ENCODE measurements at regions of chr13 and their contacts with region 1.

Region 1: DNA sequence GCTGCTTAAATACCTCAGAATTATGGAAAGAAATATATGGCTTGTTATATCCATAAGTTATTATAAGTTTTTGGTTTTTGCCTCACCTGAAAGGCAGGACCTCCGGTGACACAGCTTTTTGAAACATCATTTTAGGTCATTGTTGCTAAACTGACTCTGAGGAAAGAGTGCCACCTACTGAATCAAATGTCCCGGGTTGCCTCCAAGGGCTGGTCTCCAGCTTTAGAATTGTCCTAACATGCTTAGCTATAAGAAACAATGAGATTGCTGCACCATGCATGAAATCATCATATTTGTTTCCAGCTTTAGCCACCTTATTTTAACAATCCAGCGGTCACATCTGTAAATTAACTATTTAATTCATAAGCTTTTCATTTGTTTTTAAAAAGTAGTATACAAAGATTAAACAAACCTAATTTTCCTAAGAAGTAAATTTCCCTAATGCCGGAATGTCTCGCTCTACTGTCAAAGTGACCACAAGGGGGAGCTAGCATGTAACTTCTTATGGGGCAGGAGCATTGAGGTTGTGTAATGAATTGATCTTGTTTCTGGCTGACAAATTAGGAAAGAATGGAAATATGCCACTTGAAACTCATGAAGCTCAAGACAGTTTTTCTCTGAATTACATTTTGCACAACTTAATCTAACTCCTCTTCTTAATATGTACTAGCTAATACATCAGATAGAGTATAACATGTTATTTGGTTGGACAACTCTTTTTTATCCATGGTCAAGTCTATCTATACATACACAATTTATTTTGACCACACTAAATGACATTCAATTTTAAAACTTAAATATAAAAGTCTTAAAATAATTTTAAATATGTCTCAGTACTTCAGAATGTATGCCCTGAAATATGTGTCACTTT is 6.7 kb upstream of the PCDH17 start:
- DNase-seq: no peak
- H3K4me3 ChIP-seq: no peak overlapping the region
- H3K27ac ChIP-seq: no peak overlapping the region
- H3K4me1 ChIP-seq: peaks cover 8% of the 10 kb centered on the region
- H3K27me3 ChIP-seq: peaks cover 17% of the 10 kb centered on the region
- CTCF ChIP-seq: peak; percentile 89

Region 2: GRCh38 chr13:57787058-57787791 is 162.4 kb after region 1 on chr13:
- intact Hi-C with region 1: no loop called
- DNase-seq: no peak
- H3K4me3 ChIP-seq: no peak overlapping the region
- H3K27ac ChIP-seq: no peak overlapping the region
- H3K4me1 ChIP-seq: no peaks in the 10 kb centered on the region
- H3K27me3 ChIP-seq: no peaks in the 10 kb centered on the region
- CTCF ChIP-seq: no peak

Region 3: DNA sequence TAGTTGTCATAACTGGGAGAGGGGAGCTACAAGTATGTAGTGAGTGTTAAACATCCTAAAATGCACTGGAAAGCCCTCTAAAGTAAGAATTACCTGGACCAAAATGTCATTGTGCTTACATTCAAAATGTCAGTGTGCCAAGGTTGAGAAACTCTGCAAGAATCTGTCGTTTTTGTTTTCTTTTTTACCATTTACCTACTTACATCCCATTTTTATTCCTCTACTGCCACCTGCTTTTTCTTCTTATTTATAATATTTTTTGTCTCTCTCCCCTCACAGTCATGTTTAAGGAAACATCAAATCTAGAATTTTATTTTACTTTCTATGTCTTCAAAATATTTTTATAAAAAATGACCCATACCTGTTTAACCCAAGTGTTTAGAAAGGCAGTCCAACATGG is 233.1 kb after region 1 on chr13:
- intact Hi-C with region 1: loop called (anchors 5 kb)
- DNase-seq: no peak
- H3K4me3 ChIP-seq: no peak overlapping the region
- H3K27ac ChIP-seq: no peak overlapping the region
- H3K4me1 ChIP-seq: no peaks in the 10 kb centered on the region
- H3K27me3 ChIP-seq: no peaks in the 10 kb centered on the region
- CTCF ChIP-seq: peak; percentile 25

Measured in left ventricle myocardium inferior (tissue), 1 donor.